Ovary (tissue), 10 donors: ENCODE measurements at regions of chr3 and their contacts with region 1.

Region 1: GRCh38 chr3:72447059-72447946 is 400.9 kb downstream of the SHQ1 start:
- DNase-seq: peak; percentile 92 to 97 (median 95)
- H3K4me3 ChIP-seq: peak overlapping the region; percentile 79
- H3K27ac ChIP-seq: peak overlapping the region; percentile 31 to 73
- H3K4me1 ChIP-seq: peaks cover 11% of the 10 kb centered on the region
- H3K27me3 ChIP-seq: no peaks in the 10 kb centered on the region
- CTCF ChIP-seq: no peak
- EP300 ChIP-seq: no peak
- POLR2A ChIP-seq: no peak

Region 2: DNA sequence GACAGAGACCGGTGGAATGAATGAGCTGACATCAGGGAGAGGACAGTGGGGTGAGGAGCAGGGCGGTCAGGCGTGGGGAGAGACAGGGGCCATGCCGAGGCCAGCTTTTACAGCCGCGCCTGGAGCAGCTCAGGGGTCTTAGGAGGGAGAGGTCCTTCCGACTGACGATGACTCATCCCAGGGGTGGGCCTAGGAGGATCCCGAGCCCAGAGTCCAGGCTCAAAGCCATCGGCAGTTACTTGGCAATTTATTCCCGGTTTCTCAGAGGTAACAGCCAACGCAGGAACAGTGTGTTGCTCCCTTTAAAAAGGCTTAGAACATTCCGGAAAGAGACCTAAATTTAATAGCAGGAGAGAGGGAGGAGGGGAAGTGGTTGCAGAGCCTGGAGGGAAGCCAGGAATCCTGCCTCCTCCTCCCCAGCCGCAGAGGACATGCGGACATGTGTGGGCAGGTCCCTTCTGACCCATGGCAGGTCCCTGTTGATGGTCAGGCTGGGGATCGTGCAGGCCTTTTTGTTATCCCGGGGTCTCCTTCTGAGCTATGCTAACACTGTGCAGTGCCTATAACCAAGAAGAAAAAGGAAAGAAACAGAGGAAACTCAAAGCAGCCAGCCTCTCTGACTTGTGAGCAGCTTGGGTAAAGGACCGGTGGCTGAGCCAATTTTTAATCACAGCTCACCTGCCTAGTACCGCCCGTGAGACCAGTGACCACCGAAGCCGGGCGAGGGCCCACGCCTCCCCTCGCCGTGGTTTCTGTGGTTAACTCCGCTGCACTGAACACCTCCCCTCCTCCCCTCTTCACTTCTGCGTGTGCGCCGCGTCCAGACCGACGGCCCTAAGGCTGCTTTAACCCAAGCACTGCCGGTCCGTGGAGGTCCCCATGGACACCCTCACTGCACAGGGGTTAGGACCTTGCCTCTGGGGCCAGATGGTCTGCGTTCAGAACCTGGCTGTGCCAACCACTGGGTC is 269.9 kb before region 1 on chr3:
- intact Hi-C with region 1: loop called in 2 of 4 experiments (anchors 10 kb)
- DNase-seq: peak; percentile 55 to 77 (median 66)
- H3K4me3 ChIP-seq: no peak overlapping the region
- H3K27ac ChIP-seq: peak overlapping the region in 1 of 2 donors; percentile 17
- H3K4me1 ChIP-seq: peaks cover 23% of the 10 kb centered on the region
- H3K27me3 ChIP-seq: no peaks in the 10 kb centered on the region
- CTCF ChIP-seq: no peak
- EP300 ChIP-seq: no peak
- POLR2A ChIP-seq: no peak